Right ventricle myocardium superior (tissue), 1 donor: ENCODE measurements at regions of chr6 and their contacts with region 1.

Region 1: DNA sequence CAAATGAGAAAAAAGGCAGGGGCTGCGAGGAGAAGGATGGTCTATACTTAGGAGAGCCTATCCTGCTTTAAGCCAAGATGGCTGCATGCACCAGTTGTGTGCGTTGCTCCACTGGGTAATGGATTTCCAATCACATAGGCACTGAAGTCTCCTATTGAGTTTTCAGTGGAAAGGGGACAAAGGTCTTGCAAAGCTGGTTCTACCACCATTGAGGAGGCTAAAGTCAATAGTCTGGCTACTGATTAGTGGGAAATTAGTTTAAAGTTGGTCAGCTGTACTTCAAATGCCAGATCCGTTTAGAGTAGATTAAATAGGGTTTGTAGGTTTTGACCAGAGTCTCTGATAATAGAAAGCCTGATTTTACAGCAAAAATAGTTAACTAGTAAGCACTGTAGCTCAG is 104.9 kb downstream of the SESN1 start:
- DNase-seq: no peak
- ATAC-seq: no peak

Region 2: DNA sequence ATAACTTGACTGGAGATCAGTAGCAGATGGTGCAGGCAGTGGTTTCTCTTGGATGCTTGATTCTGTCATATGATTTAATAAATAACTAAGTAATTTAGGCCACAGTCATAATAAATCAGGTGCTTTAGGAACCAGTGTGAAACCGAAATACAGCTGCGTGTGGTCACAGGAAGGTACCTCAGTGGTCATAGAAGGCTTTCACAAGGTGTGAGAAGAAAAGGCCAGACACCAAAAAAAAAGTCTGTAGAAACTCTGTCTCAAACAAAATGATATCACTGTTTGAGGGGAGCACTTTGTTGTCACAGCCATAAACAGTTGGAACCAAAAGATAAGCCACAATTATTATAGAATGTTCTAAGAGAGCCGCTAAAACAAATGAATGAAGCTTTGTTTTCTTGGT is 85.0 kb before region 1 on chr6:
- intact Hi-C with region 1: loop called (anchors 10 kb)
- DNase-seq: no peak
- ATAC-seq: no peak

Region 3: GRCh38 chr6:110446405-110446804 is 1456.7 kb after region 1 on chr6:
- intact Hi-C with region 1: no loop called
- DNase-seq: no peak
- ATAC-seq: no peak